ENCODE measurements at regions of chr13 and their contacts with region 1.

Region 1: GRCh38 chr13:79451500-79451962 is 29.4 kb upstream of the NDFIP2 start:
- DNase-seq: peak; percentile 89
- H3K4me3 Mint-ChIP-seq: peak overlapping the region; percentile 78
- H3K27ac Mint-ChIP-seq: peak overlapping the region; percentile 98
- H3K4me1 Mint-ChIP-seq: peaks cover 92% of the 10 kb centered on the region
- H3K27me3 Mint-ChIP-seq: no peaks in the 10 kb centered on the region

Region 2: GRCh38 chr13:78215458-78216108 is 1235.9 kb before region 1 on chr13:
- intact Hi-C with region 1: no loop called
- DNase-seq: no peak
- H3K4me3 Mint-ChIP-seq: no peak overlapping the region
- H3K27ac Mint-ChIP-seq: no peak overlapping the region
- H3K4me1 Mint-ChIP-seq: no peaks in the 10 kb centered on the region
- H3K27me3 Mint-ChIP-seq: no peaks in the 10 kb centered on the region

Region 3: GRCh38 chr13:79393564-79394249 is 57.8 kb before region 1 on chr13:
- intact Hi-C with region 1: loop called (anchors 1 kb)
- DNase-seq: no peak
- H3K4me3 Mint-ChIP-seq: peak overlapping the region; percentile 64
- H3K27ac Mint-ChIP-seq: peak overlapping the region; percentile 60
- H3K4me1 Mint-ChIP-seq: peaks cover 62% of the 10 kb centered on the region
- H3K27me3 Mint-ChIP-seq: no peaks in the 10 kb centered on the region

Region 4: DNA sequence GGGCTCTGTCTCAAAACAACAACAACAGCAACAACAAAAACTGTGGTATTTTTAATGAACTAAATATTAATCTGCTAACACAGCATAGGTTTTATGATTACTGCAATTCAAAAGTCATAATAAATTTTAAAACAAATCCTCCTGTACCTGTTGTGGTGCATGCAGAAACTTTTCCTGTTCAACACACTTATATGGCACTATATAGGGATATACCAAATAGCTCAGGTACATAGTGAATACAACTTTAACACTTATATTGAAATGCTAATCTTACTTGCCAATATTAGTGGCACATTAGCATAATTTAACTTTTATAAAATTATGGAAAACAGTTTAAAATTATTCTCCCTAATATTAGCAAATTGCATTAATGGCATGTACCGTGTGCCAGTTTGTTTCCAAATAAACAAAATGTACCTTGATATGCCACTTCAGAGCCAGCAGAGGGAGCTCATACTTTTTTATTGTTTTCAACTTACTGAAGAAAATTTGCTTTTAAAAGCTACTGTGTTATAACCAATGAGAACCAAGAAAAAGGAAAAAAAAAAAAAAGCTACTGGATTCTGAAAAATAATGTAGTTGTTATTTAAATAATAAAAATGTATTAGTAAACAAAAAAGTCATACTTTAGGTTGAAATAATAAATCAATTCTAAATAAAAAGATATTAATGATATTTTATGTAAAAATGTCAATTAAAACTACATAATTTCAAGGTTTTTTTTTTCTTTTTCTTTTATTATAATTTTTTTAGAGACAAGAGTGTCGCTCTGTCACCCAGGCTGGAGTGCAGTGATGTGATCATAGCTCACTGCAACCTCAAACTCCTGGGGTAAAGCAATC is 27.5 kb before region 1 on chr13:
- intact Hi-C with region 1: loop called (anchors 1 kb)
- DNase-seq: no peak
- H3K4me3 Mint-ChIP-seq: no peak overlapping the region
- H3K27ac Mint-ChIP-seq: no peak overlapping the region
- H3K4me1 Mint-ChIP-seq: peaks cover 35% of the 10 kb centered on the region
- H3K27me3 Mint-ChIP-seq: no peaks in the 10 kb centered on the region

Region 5: GRCh38 chr13:79435561-79435990 is 16.0 kb before region 1 on chr13:
- intact Hi-C with region 1: loop called (anchors 1 kb)
- DNase-seq: no peak
- H3K4me3 Mint-ChIP-seq: no peak overlapping the region
- H3K27ac Mint-ChIP-seq: no peak overlapping the region
- H3K4me1 Mint-ChIP-seq: peaks cover 33% of the 10 kb centered on the region
- H3K27me3 Mint-ChIP-seq: no peaks in the 10 kb centered on the region

Region 6: GRCh38 chr13:79508224-79508961 is 56.9 kb after region 1 on chr13:
- intact Hi-C with region 1: no loop called
- DNase-seq: no peak
- H3K4me3 Mint-ChIP-seq: no peak overlapping the region
- H3K27ac Mint-ChIP-seq: no peak overlapping the region
- H3K4me1 Mint-ChIP-seq: peaks cover 84% of the 10 kb centered on the region
- H3K27me3 Mint-ChIP-seq: no peaks in the 10 kb centered on the region

Region 7: DNA sequence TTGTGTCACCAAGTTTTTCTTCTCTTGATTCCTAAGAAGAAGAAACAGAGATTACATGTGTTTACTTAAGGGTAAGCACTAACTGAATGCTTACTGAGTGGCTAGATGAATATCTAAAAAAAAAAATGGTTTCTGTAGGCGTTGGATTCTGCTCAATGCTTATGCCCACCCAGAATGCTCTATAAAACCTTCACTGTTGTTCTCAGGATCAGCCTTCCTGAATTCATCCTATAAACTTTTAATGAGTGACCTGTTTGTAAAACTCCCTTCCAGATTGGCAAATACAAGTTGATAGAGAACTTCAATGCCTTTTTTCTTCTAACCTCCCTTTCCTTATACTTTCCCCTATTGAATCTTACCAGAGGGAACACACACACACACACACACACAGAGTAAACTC is 119.6 kb after region 1 on chr13:
- intact Hi-C with region 1: no loop called
- DNase-seq: no peak
- H3K4me3 Mint-ChIP-seq: no peak overlapping the region
- H3K27ac Mint-ChIP-seq: no peak overlapping the region
- H3K4me1 Mint-ChIP-seq: no peaks in the 10 kb centered on the region
- H3K27me3 Mint-ChIP-seq: no peaks in the 10 kb centered on the region